CD4-positive, alpha-beta memory T cell (primary cell): ENCODE measurements at regions of chr7 and their contacts with region 1.

Region 1: GRCh38 chr7:105759670-105760550 is 116.5 kb downstream of the ATXN7L1 start:
- DNase-seq: peak in 2 of 5 donors; percentile 23 to 34
- H3K4me3 ChIP-seq: no peak overlapping the region
- H3K4me3 Mint-ChIP-seq: peak overlapping the region in 4 of 8 donors; percentile 8 to 67 (median 23)
- H3K27ac ChIP-seq: no peak overlapping the region
- H3K27ac Mint-ChIP-seq: peak overlapping the region in 6 of 7 donors; percentile 38 to 94 (median 78)
- H3K4me1 ChIP-seq: peaks cover 39% of the 10 kb centered on the region
- H3K4me1 Mint-ChIP-seq: peaks cover 33 to 49% (median 39%) of the 10 kb centered on the region in 4 donors
- H3K27me3 ChIP-seq: no peaks in the 10 kb centered on the region
- H3K27me3 Mint-ChIP-seq: no peaks in the 10 kb centered on the region

Region 2: GRCh38 chr7:105678811-105679495 is 81.0 kb before region 1 on chr7:
- CTCF ChIA-PET with region 1: interaction called, 10 read pairs
- POLR2A ChIA-PET with region 1: interaction called, 4 read pairs
- intact Hi-C with region 1: no loop called
- DNase-seq: peak in 2 of 5 donors; percentile 17 to 27
- H3K4me3 ChIP-seq: peak overlapping the region; percentile 12 to 27
- H3K4me3 Mint-ChIP-seq: peak overlapping the region; percentile 86 to 95 (median 92)
- H3K27ac ChIP-seq: peak overlapping the region; percentile 83
- H3K27ac Mint-ChIP-seq: peak overlapping the region; percentile 90 to 99 (median 96)
- H3K4me1 ChIP-seq: peaks cover 63% of the 10 kb centered on the region
- H3K4me1 Mint-ChIP-seq: peaks cover 61 to 94% (median 74%) of the 10 kb centered on the region in 4 donors
- H3K27me3 ChIP-seq: no peaks in the 10 kb centered on the region
- H3K27me3 Mint-ChIP-seq: no peaks in the 10 kb centered on the region

Region 3: GRCh38 chr7:105769901-105770628 is 10.2 kb after region 1 on chr7:
- CTCF ChIA-PET with region 1: interaction called, 28 read pairs
- POLR2A ChIA-PET with region 1: no interaction called
- intact Hi-C with region 1: no loop called
- DNase-seq: no peak
- H3K4me3 ChIP-seq: no peak overlapping the region
- H3K4me3 Mint-ChIP-seq: no peak overlapping the region
- H3K27ac ChIP-seq: no peak overlapping the region
- H3K27ac Mint-ChIP-seq: peak overlapping the region in 2 of 7 donors; percentile 41 to 63
- H3K4me1 ChIP-seq: no peaks in the 10 kb centered on the region
- H3K4me1 Mint-ChIP-seq: peaks cover 7 to 27% (median 14%) of the 10 kb centered on the region in 4 donors
- H3K27me3 ChIP-seq: no peaks in the 10 kb centered on the region
- H3K27me3 Mint-ChIP-seq: no peaks in the 10 kb centered on the region

Region 4: DNA sequence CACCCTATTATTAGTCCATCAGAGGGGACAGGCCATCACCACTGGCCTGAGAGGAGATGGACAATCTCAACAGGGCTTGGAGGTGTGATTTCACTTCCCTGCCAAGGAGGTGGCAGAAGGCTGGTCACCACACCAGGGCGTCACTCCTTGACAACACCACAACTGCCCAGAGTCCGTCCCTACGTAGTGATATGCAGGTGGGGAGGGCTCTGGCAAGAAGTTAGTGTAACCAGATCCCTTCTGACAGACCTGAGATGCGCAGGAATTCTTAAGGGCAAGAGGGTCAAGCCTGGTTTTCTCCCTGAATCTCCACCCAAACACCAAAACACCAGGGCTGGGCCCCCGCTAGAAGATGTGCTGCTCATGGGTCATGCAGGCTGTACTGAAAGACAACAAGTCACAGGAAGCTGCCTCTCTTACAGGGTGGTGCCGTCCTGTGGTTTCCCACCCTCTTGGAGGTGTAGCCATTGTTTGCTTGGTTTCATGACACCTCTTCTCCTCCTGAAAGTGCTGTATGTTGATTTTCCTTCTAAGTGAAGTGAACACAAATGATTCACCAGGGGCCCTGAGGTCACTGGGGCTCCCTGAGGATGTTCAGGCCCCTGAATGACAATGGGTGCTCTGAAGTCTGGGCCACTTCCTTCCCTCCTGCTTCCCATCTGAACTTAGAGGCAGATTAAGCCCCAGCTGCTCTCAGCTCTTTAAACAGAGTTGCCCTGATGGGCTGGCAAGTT is 89.4 kb after region 1 on chr7:
- CTCF ChIA-PET with region 1: interaction called, 44 read pairs
- POLR2A ChIA-PET with region 1: interaction called, 17 read pairs
- intact Hi-C with region 1: no loop called
- DNase-seq: peak; percentile 63 to 81 (median 71)
- H3K4me3 ChIP-seq: peak overlapping the region; percentile 16 to 18
- H3K4me3 Mint-ChIP-seq: peak overlapping the region; percentile 60 to 87 (median 78)
- H3K27ac ChIP-seq: peak overlapping the region; percentile 35
- H3K27ac Mint-ChIP-seq: peak overlapping the region; percentile 74 to 96 (median 94)
- H3K4me1 ChIP-seq: peaks cover 58% of the 10 kb centered on the region
- H3K4me1 Mint-ChIP-seq: peaks cover 56 to 65% (median 58%) of the 10 kb centered on the region in 4 donors
- H3K27me3 ChIP-seq: no peaks in the 10 kb centered on the region
- H3K27me3 Mint-ChIP-seq: no peaks in the 10 kb centered on the region

Region 5: DNA sequence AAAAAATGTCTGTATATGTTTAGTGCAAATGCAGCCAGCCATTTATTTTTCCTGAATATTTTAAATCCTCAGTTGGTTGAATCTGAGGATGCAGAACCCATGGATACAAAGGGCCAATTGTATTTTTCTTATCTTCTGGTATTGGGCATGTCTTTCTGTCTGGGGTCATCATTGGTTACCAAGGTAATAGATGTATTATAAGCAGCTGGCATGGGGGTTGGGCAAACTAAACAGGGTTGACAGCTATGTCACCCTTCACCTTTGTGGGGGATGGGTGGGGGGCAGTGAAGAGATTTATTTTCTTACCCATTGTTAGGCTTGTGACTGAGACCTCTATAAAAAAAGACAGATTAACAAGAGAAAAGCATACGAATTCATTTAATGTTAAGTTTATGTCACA is 242.0 kb after region 1 on chr7:
- CTCF ChIA-PET with region 1: interaction called, 99 read pairs
- POLR2A ChIA-PET with region 1: no interaction called
- intact Hi-C with region 1: no loop called
- DNase-seq: no peak
- H3K4me3 ChIP-seq: no peak overlapping the region
- H3K4me3 Mint-ChIP-seq: no peak overlapping the region
- H3K27ac ChIP-seq: no peak overlapping the region
- H3K27ac Mint-ChIP-seq: no peak overlapping the region
- H3K4me1 ChIP-seq: no peaks in the 10 kb centered on the region
- H3K4me1 Mint-ChIP-seq: no peaks in the 10 kb centered on the region
- H3K27me3 ChIP-seq: no peaks in the 10 kb centered on the region
- H3K27me3 Mint-ChIP-seq: no peaks in the 10 kb centered on the region

Region 6: DNA sequence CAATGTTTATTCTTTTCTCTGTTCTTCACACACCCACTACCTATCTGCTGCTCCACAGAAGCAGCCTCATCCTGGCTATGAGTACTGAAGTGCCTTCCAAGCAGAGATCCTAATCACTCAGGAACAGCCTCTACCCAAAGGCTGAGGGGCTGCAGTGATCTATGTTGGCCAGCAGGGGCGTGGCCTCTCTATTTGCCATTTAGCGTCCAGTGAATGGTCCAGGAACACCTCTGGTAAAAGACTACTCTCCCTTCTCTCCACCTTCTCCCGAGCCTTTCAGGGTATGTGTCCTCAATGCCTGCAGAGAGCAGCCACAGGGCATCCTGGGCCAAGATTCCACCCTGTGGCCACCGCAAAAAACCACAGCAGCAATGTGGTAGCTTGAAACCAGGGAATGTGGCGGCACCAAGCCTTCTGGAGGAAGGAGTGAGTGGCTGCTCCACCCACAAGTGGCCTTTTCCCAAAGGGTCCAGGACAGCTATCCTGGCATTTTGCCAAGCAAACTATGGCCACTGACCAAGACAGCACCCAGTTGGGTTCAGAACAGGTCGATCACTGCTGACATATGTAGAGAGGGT is 281.3 kb after region 1 on chr7:
- CTCF ChIA-PET with region 1: interaction called, 212 read pairs
- POLR2A ChIA-PET with region 1: interaction called, 12 read pairs
- intact Hi-C with region 1: loop called (anchors 1 kb)
- DNase-seq: peak in 2 of 5 donors; percentile 19 to 30
- H3K4me3 ChIP-seq: no peak overlapping the region
- H3K4me3 Mint-ChIP-seq: peak overlapping the region in 2 of 8 donors; percentile 6 to 59
- H3K27ac ChIP-seq: no peak overlapping the region
- H3K27ac Mint-ChIP-seq: peak overlapping the region in 4 of 7 donors; percentile 0 to 74 (median 30)
- H3K4me1 ChIP-seq: peaks cover 26% of the 10 kb centered on the region
- H3K4me1 Mint-ChIP-seq: peaks cover 15 to 32% (median 25%) of the 10 kb centered on the region in 4 donors
- H3K27me3 ChIP-seq: no peaks in the 10 kb centered on the region
- H3K27me3 Mint-ChIP-seq: peaks cover 2 to 6% of the 10 kb centered on the region in 2 donors

Region 7: DNA sequence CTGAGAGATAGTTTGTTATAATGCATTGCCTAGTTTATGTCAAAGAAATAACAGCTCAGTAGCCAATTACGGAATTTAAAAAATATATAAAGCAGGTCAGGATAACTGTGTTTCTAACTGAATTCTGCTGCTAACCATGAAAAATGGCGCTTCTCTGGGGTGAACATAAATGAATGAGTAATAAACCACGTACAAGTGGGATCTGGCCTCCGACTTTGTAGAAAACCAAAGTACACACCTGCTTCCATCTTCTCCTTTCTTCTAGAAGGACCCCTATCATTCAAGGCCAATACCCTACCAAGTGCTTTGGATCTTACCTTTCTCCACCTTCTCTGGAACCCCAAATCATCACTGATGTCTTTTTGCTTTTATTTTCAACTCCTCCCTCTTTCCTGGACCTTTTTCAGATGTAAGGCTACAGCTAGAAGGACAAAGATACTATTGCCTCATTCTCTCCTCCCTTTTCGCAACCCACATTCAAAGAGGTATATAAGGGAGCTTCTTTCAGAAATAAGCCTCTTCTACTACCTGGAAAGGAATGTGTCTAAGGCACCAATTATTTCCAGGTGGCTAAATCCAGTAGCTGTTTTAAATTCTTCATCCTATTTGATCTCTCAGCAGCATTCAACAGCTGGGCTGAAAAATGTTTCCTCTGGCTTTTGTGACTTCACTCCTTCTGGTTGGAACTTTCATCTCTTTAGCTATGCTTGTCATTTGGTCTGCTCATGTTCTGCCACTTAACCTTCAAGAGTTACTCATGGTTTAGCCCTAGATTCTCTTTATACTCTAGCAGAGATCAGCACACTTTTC is 487.2 kb after region 1 on chr7:
- CTCF ChIA-PET with region 1: no interaction called
- POLR2A ChIA-PET with region 1: no interaction called
- intact Hi-C with region 1: no loop called
- DNase-seq: no peak
- H3K4me3 ChIP-seq: no peak overlapping the region
- H3K4me3 Mint-ChIP-seq: peak overlapping the region in 1 of 8 donors; percentile 15
- H3K27ac ChIP-seq: no peak overlapping the region
- H3K27ac Mint-ChIP-seq: peak overlapping the region in 1 of 7 donors; percentile 56
- H3K4me1 ChIP-seq: no peaks in the 10 kb centered on the region
- H3K4me1 Mint-ChIP-seq: no peaks in the 10 kb centered on the region
- H3K27me3 ChIP-seq: no peaks in the 10 kb centered on the region
- H3K27me3 Mint-ChIP-seq: no peaks in the 10 kb centered on the region